ENCODE measurements at regions of chr15 and their contacts with region 1.

Region 1: GRCh38 chr15:74781431-74782258 is at the start of gene CSK:
- DNase-seq: peak; percentile 93
- total RNA-seq, gene CSK: 29.6 to 31.8 TPM

Region 2: DNA sequence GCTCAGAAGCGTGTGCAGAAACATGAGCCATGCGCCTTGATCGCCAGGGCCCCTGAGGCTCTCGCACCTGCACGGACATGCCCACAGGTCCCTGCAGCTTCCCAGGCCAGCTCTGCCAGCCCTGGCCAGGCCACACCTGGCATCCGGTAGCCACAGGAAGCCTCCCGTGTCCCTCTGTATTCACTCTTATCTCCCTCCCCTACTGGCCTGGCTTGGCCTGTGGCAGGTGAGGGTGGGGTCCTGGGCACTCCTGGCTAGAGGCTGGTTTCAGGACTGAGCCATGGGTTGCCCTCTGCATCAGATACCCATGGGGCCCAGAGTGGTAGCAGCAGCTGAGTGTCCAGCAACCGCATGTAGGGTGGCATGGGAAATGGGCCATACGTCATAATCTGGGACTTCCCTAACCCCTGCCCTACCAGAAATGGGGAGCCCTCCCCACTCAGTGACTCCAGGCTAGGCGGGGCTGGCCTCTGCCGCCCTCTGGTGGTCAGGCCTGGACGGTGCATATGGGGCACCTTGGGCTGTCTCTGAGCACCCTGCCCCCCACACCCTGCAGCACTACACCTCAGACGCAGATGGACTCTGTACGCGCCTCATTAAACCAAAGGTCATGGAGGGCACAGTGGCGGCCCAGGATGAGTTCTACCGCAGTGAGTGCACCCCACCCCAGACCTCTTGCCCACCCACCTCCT is 18.4 kb after region 1 on chr15:
- intact Hi-C with region 1: loop called in 1 of 2 experiments (anchors 1 kb)
- DNase-seq: peak; percentile 95

Region 3: DNA sequence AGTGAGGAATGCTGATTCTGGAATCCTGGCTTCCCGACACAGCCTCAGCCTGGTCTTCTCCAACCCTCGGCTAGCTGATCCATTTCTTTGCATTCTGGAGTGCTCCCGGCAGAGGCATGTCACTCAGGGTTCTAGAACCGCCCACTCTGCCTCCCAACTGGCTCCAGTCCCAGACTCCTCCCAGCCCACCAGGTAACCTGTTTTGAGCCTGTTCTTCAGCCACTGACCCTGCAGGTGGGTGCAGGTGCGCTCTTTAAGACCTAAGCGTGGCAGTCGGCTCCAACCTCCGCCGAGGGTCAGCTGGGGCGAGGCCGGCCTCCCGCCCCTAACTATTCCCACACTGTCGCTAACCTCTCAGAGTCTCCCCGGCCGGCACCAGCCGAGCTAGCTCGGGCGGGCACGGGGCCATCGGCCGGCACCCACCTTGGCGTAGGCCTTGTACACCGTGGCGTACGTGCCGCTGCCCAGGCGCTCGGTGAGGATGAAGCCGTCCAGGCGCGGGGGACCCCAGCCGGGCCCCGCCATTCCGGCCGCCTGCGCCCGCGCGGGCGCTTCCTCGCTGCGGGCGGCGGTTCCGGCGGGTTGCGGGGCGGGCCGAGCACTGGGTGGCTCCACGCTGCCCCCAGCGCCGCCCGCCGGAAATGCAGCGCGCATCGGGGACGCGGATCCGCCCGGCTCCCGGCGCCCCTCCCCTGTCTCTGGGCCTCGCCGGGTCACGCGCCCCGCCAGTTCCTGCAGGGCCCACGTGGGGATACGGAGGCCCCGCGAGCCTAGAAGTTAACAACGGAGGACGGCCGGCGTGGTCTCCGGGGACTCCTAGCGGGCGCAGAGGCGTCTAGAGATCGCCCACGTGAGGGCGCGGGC is 61.2 kb after region 1 on chr15 and contains the start of gene ULK3:
- intact Hi-C with region 1: loop called in 1 of 2 experiments (anchors 5 kb)
- DNase-seq: peak; percentile 97
- total RNA-seq, gene ULK3: 19.1 to 21.8 TPM

Region 4: DNA sequence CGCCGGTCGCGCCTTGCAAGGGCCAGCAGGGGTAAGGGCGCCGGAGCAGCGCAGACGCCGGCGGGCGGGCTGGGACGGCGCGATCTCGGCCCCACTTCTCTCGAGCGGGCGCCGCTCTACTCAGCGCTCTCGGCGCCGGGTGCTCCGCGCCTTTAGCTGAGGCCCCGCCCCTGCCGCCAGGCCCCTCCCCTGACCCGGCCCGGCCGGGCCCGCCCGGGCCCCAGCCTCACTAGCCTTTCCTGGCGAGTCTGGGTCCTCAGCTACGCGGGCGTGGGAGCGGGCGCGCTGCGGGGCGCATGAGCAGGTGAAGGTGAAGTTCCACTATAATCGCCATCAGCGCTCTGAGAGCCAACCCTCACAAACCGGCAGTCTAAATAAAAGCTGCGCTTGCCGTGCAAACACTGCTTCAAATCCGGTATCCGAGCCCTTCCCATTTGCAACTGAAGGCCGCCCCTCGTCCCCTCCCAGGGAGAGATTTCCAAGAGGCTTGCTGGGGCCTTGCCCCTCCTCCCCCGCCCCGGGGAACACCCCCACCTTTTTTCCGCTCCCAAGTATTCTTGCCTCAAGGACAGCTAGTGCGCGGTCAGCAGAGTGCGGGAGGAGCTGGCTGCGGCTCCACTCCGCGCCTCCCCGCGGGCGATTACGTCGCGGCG is 175.1 kb after region 1 on chr15 and contains the start of gene RPP25:
- intact Hi-C with region 1: loop called in 1 of 2 experiments (anchors 10 kb)
- DNase-seq: peak; percentile 93
- total RNA-seq, gene RPP25: 7.5 to 9.3 TPM